ENCODE measurements at regions of chr14 and their contacts with region 1.

Region 1: DNA sequence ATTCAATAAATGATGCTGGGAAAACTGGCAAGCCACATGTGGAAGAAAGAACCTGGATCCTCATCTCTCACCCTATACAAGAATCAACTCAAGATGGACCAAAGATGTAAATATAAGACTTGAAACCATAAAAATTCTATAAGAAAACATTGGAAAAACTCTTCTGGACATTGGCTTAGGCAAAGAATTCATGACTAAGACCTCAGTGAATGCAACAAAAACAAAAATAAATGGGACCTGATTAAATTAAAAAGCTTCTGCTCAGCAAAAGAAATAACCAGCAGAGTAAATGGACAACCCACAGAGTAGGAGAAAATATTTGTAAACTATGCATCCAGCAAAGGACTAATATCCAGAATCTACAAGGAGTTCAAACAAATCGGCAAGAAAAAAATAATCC is 24.6 kb downstream of the ATG2B start:
- DNase-seq: no peak
- H3K4me3 ChIP-seq: no peak overlapping the region
- H3K27ac ChIP-seq: no peak overlapping the region
- H3K4me1 ChIP-seq: no peaks in the 10 kb centered on the region
- H3K27me3 ChIP-seq: no peaks in the 10 kb centered on the region
- CTCF ChIP-seq: no peak
- POLR2A ChIP-seq: no peak

Region 2: DNA sequence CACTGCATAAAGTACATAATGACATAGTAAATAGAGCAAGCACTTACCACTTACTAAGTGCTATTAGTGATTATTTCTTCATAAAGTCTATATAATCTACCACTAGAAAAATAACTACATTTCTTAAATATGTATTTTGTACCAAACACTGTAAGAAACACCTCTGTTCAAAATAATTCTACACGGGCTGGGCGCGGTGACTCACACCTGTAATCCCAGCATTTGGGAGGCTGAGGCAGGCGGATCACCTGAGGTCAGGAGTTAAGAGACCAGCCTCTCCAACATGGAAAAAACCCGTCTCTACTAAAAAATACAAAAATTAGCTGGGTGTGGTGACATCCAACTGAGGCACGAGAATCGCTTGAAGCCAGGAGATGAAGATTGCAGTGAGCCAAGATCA is 14.3 kb before region 1 on chr14:
- CTCF ChIA-PET with region 1: no interaction called
- POLR2A ChIA-PET with region 1: no interaction called
- dilution Hi-C with region 1: no loop called
- intact Hi-C with region 1: loop called (anchors 2 kb)
- DNase-seq: no peak
- H3K4me3 ChIP-seq: no peak overlapping the region
- H3K27ac ChIP-seq: no peak overlapping the region
- H3K4me1 ChIP-seq: no peaks in the 10 kb centered on the region
- H3K27me3 ChIP-seq: no peaks in the 10 kb centered on the region
- CTCF ChIP-seq: no peak
- POLR2A ChIP-seq: no peak